Naive thymus-derived CD4-positive, alpha-beta T cell (primary cell): ENCODE measurements at regions of chr6 and their contacts with region 1.

Region 1: DNA sequence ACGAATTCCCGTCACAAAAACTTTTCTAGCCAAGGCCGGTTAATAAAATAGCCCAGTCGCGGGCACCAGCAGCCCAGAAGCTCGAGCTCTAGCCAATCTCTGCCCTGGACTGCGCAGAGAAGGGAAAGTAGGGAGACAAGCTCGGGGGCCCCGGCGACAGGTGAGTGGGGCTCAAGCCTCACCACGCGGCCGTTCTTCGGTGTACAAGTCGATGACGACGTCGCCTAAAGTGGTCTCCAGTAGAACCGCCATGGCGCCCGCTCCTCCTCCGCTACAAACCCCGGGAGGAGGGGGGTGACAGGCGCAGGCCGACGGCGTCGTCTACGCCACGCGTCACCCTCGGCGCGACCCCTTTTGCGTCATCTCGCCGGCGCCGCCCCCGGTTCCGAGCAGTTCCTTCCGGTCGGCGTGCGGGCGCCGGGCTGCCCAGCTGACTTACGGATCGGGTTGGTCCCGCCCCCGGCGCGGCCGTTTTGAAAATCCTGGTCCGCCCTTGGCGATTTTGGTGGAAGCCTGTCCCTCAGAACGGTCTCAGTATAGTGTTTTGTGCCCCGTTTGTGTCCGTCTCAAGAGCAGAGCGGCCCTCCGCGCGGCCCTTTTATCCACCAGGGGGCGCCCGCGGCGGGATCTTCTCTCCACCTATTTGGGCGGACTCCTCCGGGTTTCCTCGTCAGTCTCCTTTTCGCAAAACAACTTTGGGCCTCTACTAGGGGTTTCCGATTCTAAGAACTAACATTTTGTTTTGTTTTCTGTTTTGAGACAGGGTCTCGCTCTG is at the start of gene PPIL4:
- DNase-seq: peak; percentile 94 to 98 (median 97)
- ATAC-seq: peak; percentile 93
- H3K4me3 ChIP-seq: peak within 1 kb of the TSS; percentile 90
- H3K4me3 Mint-ChIP-seq: peak within 1 kb of the TSS; percentile 86 to 100 (median 98)
- H3K27ac ChIP-seq: peak within 1 kb of the TSS; percentile 99
- H3K27ac Mint-ChIP-seq: peak within 1 kb of the TSS; percentile 91 to 100 (median 99)
- H3K4me1 ChIP-seq: peaks cover 19 to 22% of the 10 kb centered on the region in 2 donors
- H3K4me1 Mint-ChIP-seq: peaks cover 31 to 51% (median 41%) of the 10 kb centered on the region in 7 donors
- H3K27me3 ChIP-seq: no peaks in the 10 kb centered on the region
- H3K27me3 Mint-ChIP-seq: peaks cover 0 to 15% (median 6%) of the 10 kb centered on the region in 5 donors
- total RNA-seq, gene PPIL4: 21.0 to 42.9 (median 35.7) TPM

Region 2: DNA sequence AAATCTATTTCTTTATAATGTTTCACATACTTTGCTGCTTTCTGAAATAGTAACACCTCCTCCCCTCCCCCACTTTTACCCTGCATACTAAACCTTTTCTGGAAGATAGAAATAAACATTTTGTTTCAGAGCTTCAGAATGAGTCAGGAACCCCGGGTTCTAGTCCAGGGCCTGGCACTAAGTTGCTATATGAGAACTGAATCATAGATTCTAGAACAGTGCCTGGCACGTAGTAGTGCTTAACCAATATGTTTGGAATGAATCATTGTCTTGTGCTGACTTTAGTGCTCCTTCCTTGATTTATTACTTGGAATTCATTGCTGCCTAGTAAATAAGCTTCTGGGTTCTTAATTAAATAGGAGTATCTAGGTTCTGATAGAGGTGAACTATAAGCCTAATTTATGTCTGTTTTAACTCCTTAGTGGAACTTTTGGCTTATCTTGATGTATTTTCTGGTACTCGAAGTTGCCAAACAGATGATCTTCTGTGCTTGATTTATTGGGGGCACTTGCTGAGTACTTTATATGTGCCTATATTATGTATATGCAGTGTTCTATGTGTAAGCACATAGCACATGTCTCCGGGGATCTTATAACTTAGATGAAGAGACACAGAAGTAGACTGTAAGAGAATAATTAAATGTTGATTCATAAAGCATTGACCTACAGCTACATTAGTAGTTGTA is 209.9 kb before region 1 on chr6:
- CTCF ChIA-PET with region 1: no interaction called
- POLR2A ChIA-PET with region 1: no interaction called
- intact Hi-C with region 1: no loop called
- DNase-seq: no peak
- ATAC-seq: peak; percentile 61
- H3K4me3 ChIP-seq: no peak overlapping the region
- H3K4me3 Mint-ChIP-seq: peak overlapping the region in 9 of 10 donors; percentile 0 to 73 (median 50)
- H3K27ac ChIP-seq: no peak overlapping the region
- H3K27ac Mint-ChIP-seq: peak overlapping the region in 8 of 9 donors; percentile 6 to 82 (median 23)
- H3K4me1 ChIP-seq: peaks cover 40 to 44% of the 10 kb centered on the region in 2 donors
- H3K4me1 Mint-ChIP-seq: peaks cover 67 to 100% (median 88%) of the 10 kb centered on the region in 7 donors
- H3K27me3 ChIP-seq: no peaks in the 10 kb centered on the region
- H3K27me3 Mint-ChIP-seq: no peaks in the 10 kb centered on the region

Region 3: GRCh38 chr6:149499066-149499465 is 46.9 kb before region 1 on chr6:
- CTCF ChIA-PET with region 1: no interaction called
- POLR2A ChIA-PET with region 1: no interaction called
- intact Hi-C with region 1: loop called (anchors 1 kb)
- DNase-seq: no peak
- ATAC-seq: no peak
- H3K4me3 ChIP-seq: no peak overlapping the region
- H3K4me3 Mint-ChIP-seq: no peak overlapping the region
- H3K27ac ChIP-seq: no peak overlapping the region
- H3K27ac Mint-ChIP-seq: peak overlapping the region in 8 of 9 donors; percentile 14 to 100 (median 80)
- H3K4me1 ChIP-seq: peaks cover 12 to 33% of the 10 kb centered on the region in 2 donors
- H3K4me1 Mint-ChIP-seq: peaks cover 18 to 68% (median 58%) of the 10 kb centered on the region in 7 donors
- H3K27me3 ChIP-seq: no peaks in the 10 kb centered on the region
- H3K27me3 Mint-ChIP-seq: no peaks in the 10 kb centered on the region

Region 4: DNA sequence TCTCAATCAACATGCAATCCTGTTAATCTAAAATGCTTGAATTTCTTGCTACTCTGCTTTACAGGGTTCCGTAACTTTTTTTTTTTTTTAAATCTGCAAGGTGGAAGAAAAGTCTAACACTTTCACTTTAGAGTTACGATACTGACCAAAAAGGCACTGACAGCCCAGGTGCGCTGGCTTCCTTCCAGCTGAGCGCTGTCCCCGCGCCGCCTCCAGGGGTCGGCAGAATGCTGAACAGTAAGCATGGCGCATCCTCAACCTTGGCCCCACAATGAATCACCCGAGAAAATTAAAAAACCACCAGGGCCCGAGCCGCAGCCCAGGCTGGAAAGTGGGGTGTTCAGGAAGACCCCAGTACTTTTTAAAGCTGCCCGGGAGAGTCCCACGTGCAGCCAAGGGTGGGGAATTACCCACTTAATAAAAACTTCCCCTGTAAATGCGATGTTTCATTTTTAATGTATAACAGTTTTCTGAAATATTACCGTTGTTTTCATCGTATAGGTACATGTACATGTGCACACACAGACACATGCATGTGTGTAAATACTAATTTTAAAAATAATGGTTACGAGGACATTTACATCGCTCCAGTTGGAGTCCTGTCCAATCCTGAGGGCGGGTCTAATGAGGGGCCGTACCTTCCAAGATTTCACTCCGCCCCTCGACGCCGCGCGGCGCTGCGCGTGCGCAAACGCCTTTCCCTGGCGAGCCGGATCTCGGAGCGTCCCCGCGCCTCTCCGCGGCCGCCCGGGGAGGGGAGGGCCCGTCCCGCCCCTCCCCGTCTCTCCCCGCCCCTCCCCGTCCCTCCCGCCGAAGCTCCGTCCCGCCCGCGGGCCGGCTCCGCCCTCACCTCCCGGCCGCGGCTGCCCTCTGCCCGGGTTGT is 19.8 kb after region 1 on chr6 and contains the start of gene GINM1:
- CTCF ChIA-PET with region 1: interaction called, 10 read pairs
- POLR2A ChIA-PET with region 1: interaction called, 16 read pairs
- intact Hi-C with region 1: loop called (anchors 1 kb)
- DNase-seq: peak; percentile 92 to 99 (median 96)
- ATAC-seq: peak; percentile 94
- H3K4me3 ChIP-seq: peak within 1 kb of the TSS; percentile 89
- H3K4me3 Mint-ChIP-seq: peak within 1 kb of the TSS; percentile 93 to 99 (median 97)
- H3K27ac ChIP-seq: peak within 1 kb of the TSS; percentile 95
- H3K27ac Mint-ChIP-seq: peak within 1 kb of the TSS; percentile 87 to 97 (median 97)
- H3K4me1 ChIP-seq: peaks cover 0 to 6% of the 10 kb centered on the region in 2 donors
- H3K4me1 Mint-ChIP-seq: peaks cover 3 to 39% (median 19%) of the 10 kb centered on the region in 7 donors
- H3K27me3 ChIP-seq: no peaks in the 10 kb centered on the region
- H3K27me3 Mint-ChIP-seq: peaks cover 0 to 7% (median 0%) of the 10 kb centered on the region in 5 donors
- total RNA-seq, gene GINM1: 14.4 to 27.3 (median 19.9) TPM

Region 5: GRCh38 chr6:149628875-149629510 is 83.1 kb after region 1 on chr6:
- CTCF ChIA-PET with region 1: no interaction called
- POLR2A ChIA-PET with region 1: no interaction called
- intact Hi-C with region 1: no loop called
- DNase-seq: no peak
- ATAC-seq: peak; percentile 56
- H3K4me3 ChIP-seq: no peak overlapping the region
- H3K4me3 Mint-ChIP-seq: no peak overlapping the region
- H3K27ac ChIP-seq: no peak overlapping the region
- H3K27ac Mint-ChIP-seq: peak overlapping the region in 3 of 9 donors; percentile 11 to 48 (median 14)
- H3K4me1 ChIP-seq: no peaks in the 10 kb centered on the region
- H3K4me1 Mint-ChIP-seq: peaks cover 0 to 22% (median 0%) of the 10 kb centered on the region in 7 donors
- H3K27me3 ChIP-seq: no peaks in the 10 kb centered on the region
- H3K27me3 Mint-ChIP-seq: no peaks in the 10 kb centered on the region

Region 6: DNA sequence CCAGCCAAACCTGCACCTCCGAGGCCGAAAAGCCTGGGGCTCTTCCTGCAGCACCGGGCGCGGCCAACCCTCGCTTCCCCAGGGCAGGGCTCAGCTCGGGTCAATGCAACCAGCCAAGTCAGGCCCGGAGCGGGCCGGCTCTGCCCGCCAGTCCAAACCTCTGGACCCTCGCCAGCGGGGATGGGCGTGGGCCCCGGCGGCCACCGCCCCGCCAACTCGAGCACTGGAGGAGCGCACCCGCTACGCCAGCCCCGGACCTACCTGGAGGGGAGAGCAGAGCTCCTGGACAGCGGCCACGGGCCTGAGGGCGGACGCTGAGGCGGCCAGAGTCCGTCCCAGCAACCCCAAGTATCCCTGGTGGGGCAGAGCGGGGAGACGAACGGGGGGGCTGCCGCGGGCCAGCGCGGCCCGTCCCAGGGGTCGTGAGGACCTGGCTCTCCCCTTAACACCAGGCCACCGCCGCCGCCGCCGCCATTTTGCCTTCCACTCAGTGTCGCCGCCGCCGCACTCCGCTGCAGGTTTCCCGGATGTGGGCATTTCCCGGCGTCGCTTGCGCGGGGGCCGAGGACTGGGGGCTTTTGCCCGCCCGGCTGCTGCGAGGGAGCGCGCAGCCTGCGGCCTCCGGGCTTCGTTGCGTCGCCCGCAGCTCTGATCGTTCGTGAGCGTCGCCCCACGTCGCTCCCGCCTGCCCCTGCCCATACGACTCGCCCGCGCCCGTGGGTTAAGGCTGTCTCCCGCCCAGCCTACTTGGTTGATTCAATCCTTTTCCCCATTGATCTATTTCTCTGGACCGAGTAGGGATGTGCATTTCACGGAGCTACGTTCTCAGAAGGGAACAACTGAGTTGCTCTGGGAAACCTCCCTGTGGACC is 171.9 kb after region 1 on chr6 and contains the start of gene LATS1:
- CTCF ChIA-PET with region 1: interaction called, 12 read pairs
- POLR2A ChIA-PET with region 1: interaction called, 18 read pairs
- intact Hi-C with region 1: loop called (anchors 1 kb)
- DNase-seq: peak; percentile 76 to 96 (median 91)
- ATAC-seq: peak; percentile 96
- H3K4me3 ChIP-seq: peak within 1 kb of the TSS; percentile 72
- H3K4me3 Mint-ChIP-seq: peak within 1 kb of the TSS; percentile 89 to 99 (median 94)
- H3K27ac ChIP-seq: peak within 1 kb of the TSS; percentile 97
- H3K27ac Mint-ChIP-seq: peak within 1 kb of the TSS; percentile 95 to 99 (median 97)
- H3K4me1 ChIP-seq: peaks cover 11 to 19% of the 10 kb centered on the region in 2 donors
- H3K4me1 Mint-ChIP-seq: peaks cover 18 to 51% (median 44%) of the 10 kb centered on the region in 7 donors
- H3K27me3 ChIP-seq: no peaks in the 10 kb centered on the region
- H3K27me3 Mint-ChIP-seq: no peaks in the 10 kb centered on the region
- total RNA-seq, gene LATS1: 33.3 to 49.5 (median 44.6) TPM

Region 7: GRCh38 chr6:149746147-149746946 is 200.4 kb after region 1 on chr6 and contains the start of gene NUP43:
- CTCF ChIA-PET with region 1: no interaction called
- POLR2A ChIA-PET with region 1: interaction called, 3 read pairs
- intact Hi-C with region 1: loop called (anchors 1 kb)
- DNase-seq: peak; percentile 75 to 91 (median 90)
- ATAC-seq: peak; percentile 80
- H3K4me3 ChIP-seq: peak within 1 kb of the TSS; percentile 77
- H3K4me3 Mint-ChIP-seq: peak within 1 kb of the TSS; percentile 93 to 99 (median 97)
- H3K27ac ChIP-seq: peak within 1 kb of the TSS; percentile 82
- H3K27ac Mint-ChIP-seq: peak within 1 kb of the TSS; percentile 86 to 97 (median 95)
- H3K4me1 ChIP-seq: peaks cover 17 to 26% of the 10 kb centered on the region in 2 donors
- H3K4me1 Mint-ChIP-seq: peaks cover 14 to 46% (median 32%) of the 10 kb centered on the region in 7 donors
- H3K27me3 ChIP-seq: no peaks in the 10 kb centered on the region
- H3K27me3 Mint-ChIP-seq: no peaks in the 10 kb centered on the region
- total RNA-seq, gene NUP43: 14.0 to 70.7 (median 60.2) TPM

Region 8: DNA sequence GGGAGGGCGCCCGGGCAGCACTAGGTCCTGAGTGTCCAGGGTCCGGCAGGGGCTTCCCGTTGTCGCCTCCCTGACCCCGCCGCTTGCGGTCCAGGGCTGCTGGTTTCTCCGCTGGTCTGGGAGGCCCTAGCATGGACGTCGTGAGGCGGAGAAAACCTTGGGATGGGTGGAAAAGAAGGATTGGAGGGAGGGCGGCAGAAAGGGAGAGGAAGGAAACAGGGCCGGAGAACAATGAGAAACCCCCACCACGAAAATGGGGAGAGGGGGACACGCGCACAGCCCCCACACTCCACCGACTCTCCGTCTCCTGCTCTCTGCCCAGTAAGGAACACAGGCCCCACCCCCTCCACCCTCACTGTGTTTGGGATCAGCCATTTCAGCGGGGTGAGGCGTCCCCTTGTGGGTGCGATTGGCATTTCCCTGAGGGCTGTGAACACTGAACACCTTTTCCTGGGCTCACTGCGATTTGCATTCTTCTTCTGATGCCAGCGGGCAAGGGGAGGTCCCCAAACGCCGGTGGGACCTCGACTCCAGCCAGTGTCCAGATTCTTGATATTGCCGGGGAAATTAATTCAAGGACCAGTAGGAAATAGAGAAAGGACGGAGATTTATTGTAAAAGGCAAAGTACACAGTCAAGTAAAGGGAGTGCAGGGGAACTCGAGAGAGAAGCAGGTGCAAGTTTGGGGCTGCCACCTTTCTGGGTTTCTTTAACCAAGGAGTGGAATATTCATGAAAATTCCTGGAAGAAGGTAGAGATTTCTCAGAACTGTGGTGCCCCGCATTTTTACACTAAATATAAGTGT is 380.2 kb after region 1 on chr6:
- CTCF ChIA-PET with region 1: no interaction called
- POLR2A ChIA-PET with region 1: no interaction called
- intact Hi-C with region 1: loop called (anchors 1 to 2 kb)
- DNase-seq: peak; percentile 35 to 77 (median 56)
- ATAC-seq: peak; percentile 76
- H3K4me3 ChIP-seq: no peak overlapping the region
- H3K4me3 Mint-ChIP-seq: peak overlapping the region in 9 of 10 donors; percentile 12 to 73 (median 40)
- H3K27ac ChIP-seq: no peak overlapping the region
- H3K27ac Mint-ChIP-seq: peak overlapping the region in 1 of 9 donors; percentile 10
- H3K4me1 ChIP-seq: peaks cover 6 to 7% of the 10 kb centered on the region in 2 donors
- H3K4me1 Mint-ChIP-seq: peaks cover 18 to 30% (median 26%) of the 10 kb centered on the region in 7 donors
- H3K27me3 ChIP-seq: peaks cover 21 to 32% of the 10 kb centered on the region in 2 donors
- H3K27me3 Mint-ChIP-seq: peaks cover 85 to 93% (median 87%) of the 10 kb centered on the region in 5 donors

Region 9: DNA sequence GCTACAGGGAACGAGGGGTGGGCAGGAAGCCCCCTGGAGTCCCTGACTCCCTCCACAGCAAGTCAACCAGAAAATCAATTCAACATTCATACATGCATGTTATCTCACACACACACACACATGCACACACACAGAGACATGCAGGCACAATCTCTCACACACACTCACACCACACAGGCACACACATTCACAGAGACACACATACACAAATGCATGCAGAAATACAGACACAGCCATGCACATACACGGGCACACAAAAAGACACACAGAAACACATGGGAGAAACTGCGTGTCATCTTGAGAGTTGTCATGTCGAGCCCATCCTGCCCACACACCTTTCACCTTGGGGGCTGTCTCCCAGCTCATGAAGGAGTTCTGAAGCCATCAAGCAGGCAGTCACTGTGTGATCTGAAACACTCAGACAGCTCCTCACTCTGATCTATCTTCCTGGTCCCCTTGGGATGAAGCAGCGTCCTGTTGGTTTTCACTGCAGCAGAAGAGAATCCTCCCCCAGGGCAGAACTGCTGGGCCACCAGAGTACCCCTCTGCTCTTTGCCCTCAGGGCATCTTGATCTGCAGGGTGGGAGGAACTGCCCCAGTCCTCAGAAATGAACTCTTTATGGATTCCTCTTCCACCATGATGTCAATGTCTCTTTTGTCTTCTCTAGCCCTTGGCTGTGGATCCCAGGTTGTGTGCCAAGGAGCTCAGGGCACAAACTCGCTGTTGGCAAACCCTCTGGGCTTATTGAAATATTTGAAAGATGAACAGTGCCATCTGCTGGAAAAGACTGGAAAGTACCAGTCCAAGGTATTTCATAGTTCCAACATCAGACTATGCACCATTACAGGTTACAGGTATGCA is 470.6 kb after region 1 on chr6:
- CTCF ChIA-PET with region 1: no interaction called
- POLR2A ChIA-PET with region 1: no interaction called
- intact Hi-C with region 1: loop called in 1 of 2 experiments (anchors 1 kb)
- DNase-seq: peak in 8 of 9 donors; percentile 38 to 77 (median 68)
- ATAC-seq: peak; percentile 85
- H3K4me3 ChIP-seq: no peak overlapping the region
- H3K4me3 Mint-ChIP-seq: no peak overlapping the region
- H3K27ac ChIP-seq: no peak overlapping the region
- H3K27ac Mint-ChIP-seq: peak overlapping the region in 1 of 9 donors; percentile 1
- H3K4me1 ChIP-seq: peaks cover 0 to 2% of the 10 kb centered on the region in 2 donors
- H3K4me1 Mint-ChIP-seq: peaks cover 10 to 23% (median 15%) of the 10 kb centered on the region in 7 donors
- H3K27me3 ChIP-seq: peaks cover 11 to 16% of the 10 kb centered on the region in 2 donors
- H3K27me3 Mint-ChIP-seq: peaks cover 60 to 80% (median 66%) of the 10 kb centered on the region in 5 donors